Thyroid gland (tissue), 4 donors: ENCODE measurements at regions of chr10 and their contacts with region 1.

Region 1: DNA sequence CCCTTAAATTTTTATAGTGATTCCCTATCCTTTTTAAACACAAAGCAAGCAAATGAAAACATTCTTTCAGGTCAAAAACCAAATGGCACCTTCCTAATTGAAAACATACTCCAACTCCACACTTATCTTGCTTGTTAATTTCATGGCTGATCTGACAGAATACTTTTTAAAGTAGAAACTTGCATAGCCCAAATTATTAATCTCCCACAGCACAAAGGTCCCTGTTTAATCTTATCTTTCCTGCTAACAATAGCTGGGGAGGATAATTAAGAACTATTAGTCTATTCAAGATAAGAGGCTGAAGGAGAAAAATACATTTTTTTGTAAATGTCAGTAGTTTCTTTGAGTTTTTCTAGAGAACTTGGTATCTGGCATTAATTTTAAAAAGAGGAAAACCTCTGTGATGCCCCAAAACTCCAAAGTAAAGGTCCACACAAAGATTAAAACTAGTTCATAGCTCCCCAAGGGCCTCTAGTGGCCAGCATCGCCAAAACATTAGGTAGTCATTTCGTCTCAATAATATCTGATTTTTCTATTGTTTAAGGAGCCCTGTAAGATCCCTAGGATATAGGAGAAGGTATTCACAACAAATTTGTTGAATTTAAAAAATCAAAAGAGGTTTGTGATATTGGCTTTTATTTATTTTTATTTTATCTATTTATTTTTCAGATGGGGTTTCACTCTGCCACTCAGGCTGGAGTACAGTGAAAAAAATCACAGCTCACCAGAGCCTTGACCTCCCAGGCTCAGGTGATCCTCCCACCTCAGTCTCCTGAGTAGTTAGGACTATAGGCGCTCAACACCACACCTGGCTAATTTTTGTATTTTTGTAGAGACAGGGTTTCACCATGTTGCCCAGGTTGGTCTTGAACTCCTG is 14.7 kb downstream of the CDNF start:
- DNase-seq: peak; percentile 39 to 52
- H3K4me3 ChIP-seq: no peak overlapping the region
- H3K27ac ChIP-seq: no peak overlapping the region
- H3K4me1 ChIP-seq: peaks cover 0 to 30% of the 10 kb centered on the region in 2 donors
- H3K27me3 ChIP-seq: no peaks in the 10 kb centered on the region
- CTCF ChIP-seq: peak in 4 of 6 experiments; percentile 60 to 76 (median 71)
- POLR2A ChIP-seq: no peak

Region 2: GRCh38 chr10:14499601-14499904 is 323.6 kb before region 1 on chr10:
- intact Hi-C with region 1: loop called (anchors 5 kb)
- DNase-seq: no peak
- H3K4me3 ChIP-seq: no peak overlapping the region
- H3K27ac ChIP-seq: no peak overlapping the region
- H3K4me1 ChIP-seq: peaks cover 0 to 3% of the 10 kb centered on the region in 2 donors
- H3K27me3 ChIP-seq: no peaks in the 10 kb centered on the region
- CTCF ChIP-seq: no peak
- POLR2A ChIP-seq: no peak

Region 3: DNA sequence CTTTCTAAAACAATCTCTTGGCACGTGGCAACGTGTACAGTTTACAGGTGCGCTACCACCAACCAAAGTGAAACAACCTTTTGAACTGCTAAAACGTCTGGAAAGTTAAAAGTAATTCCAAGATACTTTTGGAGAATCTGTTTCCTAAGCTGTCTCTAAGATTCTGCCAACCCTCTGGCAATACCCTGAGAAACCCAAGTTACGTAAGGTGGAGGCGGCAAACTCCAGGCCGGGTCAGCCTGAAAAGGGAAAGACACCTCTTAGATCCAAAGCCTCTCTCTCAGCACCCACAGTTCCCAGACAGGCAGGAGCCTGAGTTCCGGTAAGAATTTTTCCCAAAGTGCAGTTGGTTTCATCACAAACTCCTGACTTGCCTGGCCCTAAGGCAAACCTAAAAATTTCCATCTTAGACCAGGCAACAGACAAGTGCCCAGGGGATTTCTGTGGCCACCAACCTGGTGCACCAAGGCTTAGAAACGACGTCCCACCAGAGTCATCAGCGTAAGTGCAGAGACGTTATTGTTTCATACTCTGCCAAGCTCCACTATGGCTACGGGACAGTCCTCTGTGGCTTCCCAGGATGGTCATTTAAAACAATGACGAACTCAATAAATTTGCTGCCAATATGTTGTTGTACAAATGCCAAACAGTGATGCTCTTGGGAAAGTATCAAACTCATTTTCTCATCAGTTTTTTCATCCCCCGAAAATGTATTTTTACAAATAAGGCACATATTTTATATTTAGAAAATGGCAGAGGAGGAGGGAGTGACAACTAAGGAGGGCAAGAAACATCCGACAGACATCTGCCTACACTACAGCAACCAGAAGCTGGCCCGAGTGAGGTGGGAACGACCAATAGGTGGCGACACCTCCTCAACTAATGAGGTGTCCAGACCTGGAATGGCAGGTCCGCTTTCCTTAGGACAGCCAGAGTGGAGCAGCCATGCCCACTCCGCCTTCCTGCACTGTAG is 286.6 kb before region 1 on chr10:
- intact Hi-C with region 1: loop called (anchors 10 kb)
- DNase-seq: peak; percentile 80 to 83
- H3K4me3 ChIP-seq: no peak overlapping the region
- H3K27ac ChIP-seq: no peak overlapping the region
- H3K4me1 ChIP-seq: no peaks in the 10 kb centered on the region
- H3K27me3 ChIP-seq: no peaks in the 10 kb centered on the region
- CTCF ChIP-seq: peak; percentile 19 to 72 (median 58)
- POLR2A ChIP-seq: no peak

Region 4: DNA sequence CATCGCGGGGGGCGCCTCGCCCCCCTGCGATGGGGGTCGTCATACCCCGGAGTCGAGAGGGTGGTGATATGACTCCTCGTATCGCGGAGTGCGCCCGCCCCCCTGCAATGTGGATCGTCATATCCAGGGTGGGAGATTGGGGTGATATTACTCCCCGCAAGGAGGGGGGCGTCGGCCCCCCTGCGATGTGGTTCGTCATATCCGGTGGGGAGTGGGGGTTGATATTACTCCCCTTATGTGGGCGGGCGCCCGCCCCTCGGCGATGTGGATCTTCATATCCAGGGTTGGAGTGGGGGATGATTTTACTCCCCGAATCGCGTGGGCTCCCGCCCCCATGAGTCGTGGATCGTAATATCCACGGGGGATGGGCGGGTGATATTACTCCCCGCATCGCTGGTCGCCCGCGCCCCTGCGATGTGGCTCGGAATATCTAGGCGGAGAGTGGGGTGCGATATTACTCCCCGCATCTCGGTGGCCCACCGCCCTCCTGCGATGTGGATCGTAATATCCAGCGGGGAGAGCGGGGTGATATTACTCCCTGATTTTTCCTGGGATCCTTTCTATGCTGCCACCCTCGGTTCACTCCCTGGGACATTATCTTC is 172.9 kb after region 1 on chr10:
- intact Hi-C with region 1: no loop called
- DNase-seq: no peak
- H3K4me3 ChIP-seq: no peak overlapping the region
- H3K27ac ChIP-seq: no peak overlapping the region
- H3K4me1 ChIP-seq: peaks cover 0 to 4% of the 10 kb centered on the region in 2 donors
- H3K27me3 ChIP-seq: no peaks in the 10 kb centered on the region
- CTCF ChIP-seq: no peak
- POLR2A ChIP-seq: no peak

Region 5: GRCh38 chr10:15200626-15201025 is 377.5 kb after region 1 on chr10:
- intact Hi-C with region 1: no loop called
- DNase-seq: no peak
- H3K4me3 ChIP-seq: no peak overlapping the region
- H3K27ac ChIP-seq: no peak overlapping the region
- H3K4me1 ChIP-seq: no peaks in the 10 kb centered on the region
- H3K27me3 ChIP-seq: no peaks in the 10 kb centered on the region
- CTCF ChIP-seq: no peak
- POLR2A ChIP-seq: no peak